CD14-positive monocyte (primary cell): ENCODE measurements at regions of chr9 and their contacts with region 1.

Region 1: DNA sequence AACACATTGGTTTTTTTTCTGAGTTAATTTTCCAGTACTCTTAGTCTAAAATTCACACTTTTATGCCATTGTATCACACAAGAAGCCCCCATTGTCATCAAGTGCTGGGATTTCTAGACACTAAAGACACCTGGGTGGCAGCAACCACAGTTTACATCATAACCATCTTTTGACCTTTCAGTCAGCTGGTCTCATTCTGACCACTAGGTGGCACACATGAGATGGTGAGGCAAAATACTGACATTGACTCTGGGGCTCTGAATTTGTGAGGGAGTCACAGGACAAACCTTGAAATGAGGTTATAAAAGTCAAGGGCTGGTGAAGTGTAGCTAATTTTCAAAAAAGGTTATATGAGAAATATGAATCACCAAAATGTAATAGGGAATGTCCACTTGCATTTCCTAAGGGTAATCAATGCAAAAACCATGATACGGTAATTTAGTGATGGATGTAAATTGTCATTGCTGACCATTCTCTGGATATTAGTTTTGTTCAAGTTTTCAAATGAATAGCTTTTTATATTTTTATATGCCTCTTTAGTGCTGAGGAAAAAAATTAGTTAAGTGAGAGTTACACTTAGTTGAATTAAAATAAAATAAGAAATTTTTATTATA is 229.4 kb downstream of the DMAC1 start:
- DNase-seq: peak; percentile 9 to 26 (median 21)
- H3K4me3 ChIP-seq: no peak overlapping the region
- H3K4me3 Mint-ChIP-seq: no peak overlapping the region
- H3K27ac ChIP-seq: no peak overlapping the region
- H3K27ac Mint-ChIP-seq: no peak overlapping the region
- H3K4me1 ChIP-seq: no peaks in the 10 kb centered on the region
- H3K4me1 Mint-ChIP-seq: no peaks in the 10 kb centered on the region
- H3K27me3 ChIP-seq: no peaks in the 10 kb centered on the region
- H3K27me3 Mint-ChIP-seq: peaks cover 0 to 2% (median 2%) of the 10 kb centered on the region in 3 donors
- CTCF ChIP-seq: peak; percentile 82

Region 2: GRCh38 chr9:8895861-8896224 is 1325.6 kb after region 1 on chr9:
- intact Hi-C with region 1: loop called in 1 of 2 experiments (anchors 10 kb)
- DNase-seq: no peak
- H3K4me3 ChIP-seq: no peak overlapping the region
- H3K4me3 Mint-ChIP-seq: no peak overlapping the region
- H3K27ac ChIP-seq: no peak overlapping the region
- H3K27ac Mint-ChIP-seq: no peak overlapping the region
- H3K4me1 ChIP-seq: no peaks in the 10 kb centered on the region
- H3K4me1 Mint-ChIP-seq: no peaks in the 10 kb centered on the region
- H3K27me3 ChIP-seq: no peaks in the 10 kb centered on the region
- H3K27me3 Mint-ChIP-seq: peaks cover 0 to 1% (median 0%) of the 10 kb centered on the region in 3 donors
- CTCF ChIP-seq: peak; percentile 41